Dendritic cell treated with granulocyte-macrophage colony-stimulating factor and Interleukin-4, amounts not matched to agents 40 ng/mL and 50 ng/mL, for 4 days (primary cell): ENCODE measurements at regions of chr20 and their contacts with region 1.

Region 1: GRCh38 chr20:24992487-24993205 is at the start of gene APMAP:
- H3K4me3 Mint-ChIP-seq: peak within 1 kb of the TSS; percentile 98
- H3K27ac Mint-ChIP-seq: peak within 1 kb of the TSS; percentile 95
- H3K4me1 Mint-ChIP-seq: peaks cover 63% of the 10 kb centered on the region
- H3K27me3 Mint-ChIP-seq: peaks cover 3% of the 10 kb centered on the region

Region 2: GRCh38 chr20:24651171-24651975 is 341.3 kb before region 1 on chr20:
- intact Hi-C with region 1: no loop called
- H3K4me3 Mint-ChIP-seq: no peak overlapping the region
- H3K27ac Mint-ChIP-seq: no peak overlapping the region
- H3K4me1 Mint-ChIP-seq: no peaks in the 10 kb centered on the region
- H3K27me3 Mint-ChIP-seq: no peaks in the 10 kb centered on the region

Region 3: GRCh38 chr20:24934101-24934661 is 58.5 kb before region 1 on chr20:
- intact Hi-C with region 1: no loop called
- H3K4me3 Mint-ChIP-seq: no peak overlapping the region
- H3K27ac Mint-ChIP-seq: peak overlapping the region; percentile 62
- H3K4me1 Mint-ChIP-seq: peaks cover 36% of the 10 kb centered on the region
- H3K27me3 Mint-ChIP-seq: no peaks in the 10 kb centered on the region

Region 4: DNA sequence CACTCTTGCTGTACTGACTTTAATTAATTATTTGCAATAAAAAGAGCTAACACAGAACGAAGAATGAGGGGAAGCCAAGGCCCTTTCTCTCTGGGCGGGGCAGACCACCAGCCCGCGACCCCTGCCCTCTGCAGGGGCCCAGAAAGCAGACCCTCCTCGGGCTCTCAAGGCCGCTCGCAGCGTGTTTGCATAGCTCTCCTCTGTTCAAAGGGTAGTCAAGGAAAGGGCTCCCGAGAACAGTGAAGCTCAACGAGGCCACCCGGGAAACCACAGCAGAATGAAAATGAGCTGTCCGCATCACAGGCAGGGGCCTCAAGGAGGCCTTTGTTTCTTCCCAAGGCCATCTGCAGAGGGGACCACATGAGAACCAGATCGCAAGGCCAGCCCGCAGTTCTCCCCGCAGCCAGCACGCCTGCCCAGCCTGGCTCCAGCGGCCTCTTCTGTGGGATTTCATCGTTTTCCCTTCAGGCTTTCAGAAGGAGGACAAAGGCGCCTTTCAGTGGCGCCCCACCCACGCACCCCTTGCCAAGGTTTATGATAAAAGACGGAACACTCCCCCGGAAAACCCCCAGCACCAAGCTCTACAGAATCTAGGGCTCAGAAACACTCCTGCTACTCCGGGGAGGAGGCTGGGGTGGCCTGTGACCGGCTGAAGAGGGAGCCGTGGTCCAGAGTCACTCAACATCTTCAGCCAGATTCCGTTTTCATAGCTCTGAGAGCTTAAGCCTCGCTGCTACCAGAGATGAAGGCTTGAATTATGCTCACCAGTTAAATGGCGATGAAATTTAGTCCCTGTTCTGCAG is 40.0 kb after region 1 on chr20:
- intact Hi-C with region 1: no loop called
- H3K4me3 Mint-ChIP-seq: no peak overlapping the region
- H3K27ac Mint-ChIP-seq: no peak overlapping the region
- H3K4me1 Mint-ChIP-seq: peaks cover 25% of the 10 kb centered on the region
- H3K27me3 Mint-ChIP-seq: no peaks in the 10 kb centered on the region

Region 5: GRCh38 chr20:25065625-25066338 is 73.1 kb after region 1 on chr20:
- intact Hi-C with region 1: loop called (anchors 1 kb)
- H3K4me3 Mint-ChIP-seq: no peak overlapping the region
- H3K27ac Mint-ChIP-seq: no peak overlapping the region
- H3K4me1 Mint-ChIP-seq: peaks cover 5% of the 10 kb centered on the region
- H3K27me3 Mint-ChIP-seq: peaks cover 40% of the 10 kb centered on the region

Region 6: DNA sequence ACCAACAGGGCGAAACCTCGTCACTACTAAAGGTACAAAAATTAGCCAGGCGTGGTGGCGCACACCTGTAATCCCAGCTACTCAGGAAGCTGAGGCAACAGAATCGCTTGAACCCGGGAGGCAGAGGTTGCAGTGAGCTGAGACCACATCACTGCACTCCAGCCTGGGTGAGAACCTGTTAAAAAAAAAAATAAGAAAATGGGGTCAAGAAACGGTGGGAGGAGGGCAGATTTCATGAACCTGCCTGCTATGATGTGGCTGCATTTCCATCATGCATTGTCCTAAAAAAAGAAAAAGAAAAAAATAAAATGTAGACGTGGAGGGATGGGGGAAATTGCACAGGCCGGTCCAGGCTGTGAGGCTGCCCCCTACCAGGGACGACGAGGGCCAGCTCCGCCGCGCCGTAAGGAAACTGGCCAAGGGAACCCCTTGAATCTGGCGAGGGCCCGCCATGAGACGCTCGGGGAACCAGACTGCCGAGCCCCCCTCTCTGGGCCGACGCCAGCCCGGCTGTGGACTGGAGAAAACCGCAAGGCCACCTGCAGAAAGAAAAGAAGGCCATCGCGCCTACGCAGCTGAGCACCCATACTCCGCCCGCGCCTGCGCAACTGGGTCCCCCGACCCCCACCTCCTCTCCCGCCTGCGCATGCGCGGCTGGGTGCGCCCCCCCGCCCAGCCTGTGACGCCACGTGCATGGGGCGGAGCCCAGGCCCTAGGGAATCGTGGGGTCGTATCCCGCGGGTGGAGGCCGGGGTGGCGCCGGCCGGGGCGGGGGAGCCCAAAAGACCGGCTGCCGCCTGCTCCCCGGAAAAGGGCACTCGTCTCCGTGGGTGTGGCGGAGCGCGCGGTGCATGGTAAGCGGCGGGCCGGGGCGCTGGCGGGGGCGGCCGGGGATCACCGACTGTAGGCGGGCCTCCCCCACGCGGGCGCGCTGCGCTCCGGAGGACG is 202.6 kb after region 1 on chr20 and contains the start of gene ENTPD6:
- intact Hi-C with region 1: loop called (anchors 5 kb)
- H3K4me3 Mint-ChIP-seq: peak within 1 kb of the TSS; percentile 97
- H3K27ac Mint-ChIP-seq: peak within 1 kb of the TSS; percentile 75
- H3K4me1 Mint-ChIP-seq: peaks cover 40% of the 10 kb centered on the region
- H3K27me3 Mint-ChIP-seq: peaks cover 11% of the 10 kb centered on the region

Region 7: GRCh38 chr20:25294459-25295385 is 302.1 kb after region 1 on chr20:
- intact Hi-C with region 1: loop called (anchors 10 kb)
- H3K4me3 Mint-ChIP-seq: no peak overlapping the region
- H3K27ac Mint-ChIP-seq: peak overlapping the region; percentile 85
- H3K4me1 Mint-ChIP-seq: peaks cover 55% of the 10 kb centered on the region
- H3K27me3 Mint-ChIP-seq: no peaks in the 10 kb centered on the region

Region 8: GRCh38 chr20:25696384-25697131 is 703.9 kb after region 1 on chr20 and contains the start of gene ZNF337:
- intact Hi-C with region 1: loop called (anchors 5 kb)
- H3K4me3 Mint-ChIP-seq: peak within 1 kb of the TSS; percentile 91
- H3K27ac Mint-ChIP-seq: peak within 1 kb of the TSS; percentile 91
- H3K4me1 Mint-ChIP-seq: peaks cover 27% of the 10 kb centered on the region
- H3K27me3 Mint-ChIP-seq: no peaks in the 10 kb centered on the region